ENCODE measurements at regions of chr12 and their contacts with region 1.

Region 1: DNA sequence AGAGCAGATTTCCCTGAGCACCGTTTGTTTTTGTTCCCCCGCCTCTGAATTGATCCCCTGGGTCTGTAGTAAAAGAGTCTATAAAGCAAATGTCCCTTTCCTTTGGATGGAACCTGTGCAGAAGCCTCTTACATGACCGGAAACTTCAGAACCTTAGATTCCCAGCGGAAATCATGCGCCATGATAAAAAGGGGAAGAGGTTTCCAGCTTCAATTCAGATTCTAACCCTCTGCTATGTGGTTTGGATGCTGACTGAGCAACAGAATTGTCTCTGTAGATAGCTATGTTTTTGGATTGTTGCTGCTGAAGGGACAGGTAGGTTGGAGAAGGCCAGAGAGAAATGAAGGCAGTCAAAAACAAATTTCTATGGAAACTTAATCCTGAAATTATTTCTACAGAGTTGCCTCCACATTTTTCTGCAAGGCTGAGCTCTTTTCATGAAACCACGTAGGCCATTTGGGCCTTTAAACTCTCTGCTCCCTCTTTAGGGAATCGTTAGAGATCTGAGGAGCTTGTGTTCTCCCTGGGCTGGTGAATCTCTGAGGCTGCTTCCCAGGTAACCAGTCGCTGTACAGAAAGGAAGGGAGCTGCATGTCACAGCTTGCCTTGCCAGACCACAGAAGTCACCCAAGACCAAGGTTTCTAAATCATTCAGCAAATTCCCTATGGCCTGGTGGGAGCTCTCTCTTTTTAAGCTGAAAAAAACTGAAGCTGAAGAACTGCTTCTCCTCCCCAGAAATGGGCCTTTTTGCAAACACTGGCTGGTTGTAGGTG is 28.7 kb upstream of the OR10P1 start:
- DNase-seq: no peak
- ATAC-seq: no peak
- H3K4me3 ChIP-seq: no peak overlapping the region
- H3K27ac ChIP-seq: no peak overlapping the region
- H3K4me1 ChIP-seq: peaks cover 14% of the 10 kb centered on the region; the same call in 1 of the 2 replicates
- H3K27me3 ChIP-seq: no peaks in the 10 kb centered on the region
- CTCF ChIP-seq: no peak
- EP300 ChIP-seq: no peak
- POLR2A ChIP-seq: no peak
- RAD21 ChIP-seq: no peak

Region 2: DNA sequence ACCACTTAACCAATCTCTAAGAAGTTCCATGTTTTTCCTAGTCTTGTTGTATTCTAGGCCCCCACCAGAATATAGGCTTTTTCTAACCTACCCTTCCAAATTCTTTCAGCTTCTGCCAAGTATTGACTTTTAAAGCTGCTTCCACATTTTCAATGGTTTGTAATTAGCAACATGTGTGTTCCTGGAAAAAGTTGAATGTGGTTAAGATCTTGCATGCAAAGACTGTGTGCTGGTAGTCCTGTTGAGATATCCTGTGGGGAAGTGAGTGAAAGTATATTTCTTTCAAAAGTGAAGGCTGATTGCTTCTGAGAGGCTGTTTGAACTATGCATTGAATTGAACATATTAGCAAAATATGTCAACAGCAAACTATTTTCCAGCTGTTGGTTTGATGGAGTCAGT is 59.3 kb before region 1 on chr12:
- CTCF ChIA-PET with region 1: no interaction called
- POLR2A ChIA-PET with region 1: no interaction called
- in situ Hi-C with region 1: no loop called
- intact Hi-C with region 1: loop called (anchors 2 kb)
- DNase-seq: no peak
- ATAC-seq: no peak
- H3K4me3 ChIP-seq: no peak overlapping the region
- H3K27ac ChIP-seq: no peak overlapping the region
- H3K4me1 ChIP-seq: no peaks in the 10 kb centered on the region
- H3K27me3 ChIP-seq: no peaks in the 10 kb centered on the region
- CTCF ChIP-seq: no peak
- EP300 ChIP-seq: no peak
- POLR2A ChIP-seq: no peak
- RAD21 ChIP-seq: no peak

Region 3: DNA sequence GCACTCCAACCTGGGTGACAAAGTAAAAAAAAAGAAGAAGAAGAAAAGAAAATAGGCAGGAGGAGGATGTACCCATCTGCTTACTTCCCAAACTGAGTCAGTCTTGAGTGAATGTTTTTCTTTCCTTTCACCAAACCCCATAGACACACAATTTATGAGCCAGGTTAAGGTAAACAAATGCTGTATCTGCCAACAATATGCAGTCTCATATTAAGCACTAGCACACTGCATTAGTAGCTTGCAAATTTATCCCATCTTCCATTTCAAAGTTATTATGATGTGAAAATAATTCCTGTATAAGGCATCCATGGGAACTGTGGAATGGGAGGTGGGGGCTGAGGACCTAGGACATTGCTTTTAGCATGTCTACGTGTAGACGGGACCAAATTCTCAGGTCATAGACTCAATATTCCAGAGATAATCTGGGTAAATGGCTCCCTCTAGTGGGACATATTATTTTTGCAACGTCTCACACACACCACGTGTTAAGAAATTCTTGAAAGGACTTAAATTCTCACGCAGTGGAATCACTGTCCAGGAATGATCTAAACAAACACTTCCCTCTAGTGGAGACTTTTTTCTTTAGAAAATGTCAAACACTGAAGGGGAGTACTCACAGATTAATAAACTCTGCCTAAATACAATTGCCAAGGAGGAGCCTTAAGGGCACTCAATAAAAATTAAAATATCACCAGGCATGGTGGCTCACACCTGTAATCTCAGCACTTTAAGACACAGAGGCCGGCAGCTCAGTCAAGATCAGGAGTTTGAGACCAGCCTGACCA is 11.5 kb after region 1 on chr12:
- CTCF ChIA-PET with region 1: no interaction called
- POLR2A ChIA-PET with region 1: no interaction called
- in situ Hi-C with region 1: no loop called
- intact Hi-C with region 1: no loop called
- DNase-seq: peak; percentile 92
- ATAC-seq: peak; percentile 97
- H3K4me3 ChIP-seq: no peak overlapping the region
- H3K27ac ChIP-seq: no peak overlapping the region
- H3K4me1 ChIP-seq: no peaks in the 10 kb centered on the region
- H3K27me3 ChIP-seq: no peaks in the 10 kb centered on the region
- CTCF ChIP-seq: peak; percentile 87
- EP300 ChIP-seq: no peak
- POLR2A ChIP-seq: no peak
- RAD21 ChIP-seq: peak; percentile 94

Measured in HepG2 (cell line).